BJ (cell line): ENCODE measurements at regions of chr11 and their contacts with region 1.

Region 1: GRCh38 chr11:131064373-131064991 is 148.2 kb upstream of the SNX19 start:
- DNase-seq: no peak
- H3K4me3 ChIP-seq: no peak overlapping the region
- H3K27me3 ChIP-seq: no peaks in the 10 kb centered on the region
- CTCF ChIP-seq: peak; percentile 96

Region 2: DNA sequence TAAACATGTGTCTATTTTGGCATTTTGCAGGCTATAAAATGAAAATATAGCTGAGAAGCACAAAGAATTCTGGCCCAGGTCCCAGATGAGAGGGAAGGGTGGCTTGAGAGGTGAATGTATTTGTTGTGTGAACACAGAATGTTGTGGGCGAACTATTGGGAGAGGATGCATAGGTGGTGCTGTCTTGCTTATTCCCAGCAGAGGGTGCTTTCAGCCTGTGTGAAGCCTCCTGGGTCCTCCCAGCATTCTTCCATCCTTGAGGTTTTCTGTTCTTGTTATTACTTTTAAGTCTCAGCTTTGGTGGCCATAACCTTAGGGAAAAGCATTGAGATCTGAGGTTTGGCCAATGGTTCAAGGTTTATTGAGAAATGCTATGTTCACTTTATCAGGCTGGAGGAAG is 39.5 kb before region 1 on chr11:
- CTCF ChIA-PET with region 1: interaction called, 21 read pairs
- POLR2A ChIA-PET with region 1: no interaction called
- DNase-seq: no peak
- H3K4me3 ChIP-seq: no peak overlapping the region
- H3K27me3 ChIP-seq: no peaks in the 10 kb centered on the region
- CTCF ChIP-seq: peak; percentile 77

Region 3: GRCh38 chr11:131079036-131079435 is 14.6 kb after region 1 on chr11:
- CTCF ChIA-PET with region 1: interaction called, 25 read pairs
- POLR2A ChIA-PET with region 1: no interaction called
- DNase-seq: no peak
- H3K4me3 ChIP-seq: no peak overlapping the region
- H3K27me3 ChIP-seq: no peaks in the 10 kb centered on the region
- CTCF ChIP-seq: no peak

Region 4: DNA sequence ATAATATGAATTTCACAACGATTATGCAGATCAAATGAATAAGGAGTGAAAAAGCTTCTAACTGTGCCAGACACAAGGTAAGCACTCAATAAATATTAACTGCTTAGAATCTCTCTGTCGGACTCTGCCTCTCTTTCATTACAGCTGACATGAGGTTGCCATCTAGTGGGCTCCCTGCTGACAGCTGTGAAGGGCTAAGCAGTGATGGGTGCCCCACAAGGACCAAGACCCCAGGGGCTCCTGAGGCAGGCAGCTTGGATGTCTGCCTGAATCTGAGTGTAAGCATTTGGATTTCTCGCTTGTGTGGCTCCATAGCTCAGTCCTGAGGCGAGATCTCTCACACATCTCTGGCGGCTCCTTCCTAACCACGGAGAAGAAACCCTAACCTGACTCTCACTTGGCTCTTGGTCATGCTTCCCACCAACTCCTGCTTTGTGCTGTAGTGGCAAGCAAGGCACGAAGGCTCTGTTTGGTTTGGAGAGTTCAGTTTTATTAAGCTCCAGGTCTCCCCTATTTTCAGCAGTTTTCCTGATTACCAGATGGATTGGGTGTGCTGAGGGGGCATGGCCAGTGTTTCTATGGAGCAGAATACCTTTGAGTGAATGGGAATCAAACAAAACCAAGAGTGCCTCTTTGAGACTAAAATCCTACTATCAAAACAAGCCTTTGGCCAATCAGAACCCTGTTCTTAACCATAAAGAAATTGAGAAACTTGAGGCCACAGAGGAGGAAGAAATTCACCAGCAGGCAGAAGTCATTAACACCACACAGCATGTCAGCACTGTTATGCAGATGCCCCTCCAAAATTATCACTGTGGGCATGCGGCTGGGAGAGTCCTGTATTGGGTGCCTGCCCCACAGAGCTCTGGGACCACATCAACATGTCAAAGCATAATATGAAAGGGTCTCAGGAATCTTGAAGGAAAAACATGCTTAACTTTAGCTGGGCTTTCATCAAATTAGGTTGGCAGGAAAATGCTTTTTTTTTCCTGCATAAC is 153.1 kb after region 1 on chr11:
- CTCF ChIA-PET with region 1: interaction called, 43 read pairs
- POLR2A ChIA-PET with region 1: no interaction called
- DNase-seq: no peak
- H3K4me3 ChIP-seq: no peak overlapping the region
- H3K27me3 ChIP-seq: no peaks in the 10 kb centered on the region
- CTCF ChIP-seq: peak; percentile 34; the same call in 1 of the 2 replicates

Region 5: DNA sequence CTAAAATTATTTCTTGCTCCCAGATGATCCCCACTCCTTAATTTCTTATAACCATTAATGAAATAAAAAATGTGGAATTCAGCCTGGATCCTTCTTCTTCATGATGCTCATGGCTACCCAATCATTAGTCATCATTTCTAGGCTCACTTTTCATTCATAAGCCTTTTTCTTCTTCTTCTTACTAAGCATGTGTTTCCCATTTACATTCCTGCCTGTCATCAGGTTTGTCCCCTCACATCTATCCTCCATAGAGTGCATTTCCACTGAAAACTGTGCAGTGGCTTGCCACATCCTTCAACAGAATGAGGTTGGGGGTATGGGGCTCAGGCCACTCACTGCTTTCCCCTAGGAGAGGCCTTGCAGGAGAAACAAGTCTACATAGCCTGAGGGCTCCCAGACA is 270.1 kb after region 1 on chr11:
- CTCF ChIA-PET with region 1: no interaction called
- POLR2A ChIA-PET with region 1: no interaction called
- DNase-seq: no peak
- H3K4me3 ChIP-seq: no peak overlapping the region
- H3K27me3 ChIP-seq: no peaks in the 10 kb centered on the region
- CTCF ChIP-seq: no peak

Region 6: GRCh38 chr11:131423715-131424114 is 359.2 kb after region 1 on chr11:
- CTCF ChIA-PET with region 1: no interaction called
- POLR2A ChIA-PET with region 1: no interaction called
- DNase-seq: no peak
- H3K4me3 ChIP-seq: no peak overlapping the region
- H3K27me3 ChIP-seq: no peaks in the 10 kb centered on the region
- CTCF ChIP-seq: no peak

Region 7: DNA sequence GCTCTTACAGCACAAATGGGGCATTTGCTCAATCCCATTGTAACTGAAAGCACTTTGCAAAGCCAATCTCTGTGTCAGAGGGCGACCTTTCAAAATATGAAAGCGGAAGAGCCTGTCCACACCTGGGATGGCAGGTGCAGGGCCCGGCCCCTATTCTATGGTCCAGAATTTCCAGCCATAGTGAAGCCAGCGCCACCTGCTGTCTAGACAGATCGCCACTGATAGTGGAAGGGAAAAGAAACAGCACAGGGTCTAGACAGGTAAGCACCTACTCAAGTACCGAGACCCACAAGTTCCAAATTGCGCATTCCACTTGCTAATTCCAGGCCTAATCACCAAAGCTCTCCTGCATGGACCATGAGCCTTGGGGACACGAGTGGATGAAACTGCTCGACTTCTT is 447.3 kb after region 1 on chr11:
- CTCF ChIA-PET with region 1: interaction called, 16 read pairs
- POLR2A ChIA-PET with region 1: no interaction called
- DNase-seq: no peak
- H3K4me3 ChIP-seq: no peak overlapping the region
- H3K27me3 ChIP-seq: no peaks in the 10 kb centered on the region
- CTCF ChIP-seq: peak; percentile 50